ENCODE measurements at regions of chr10 and their contacts with region 1.

Region 1: GRCh38 chr10:120942806-120943413 is 91.7 kb downstream of the WDR11 start:
- DNase-seq: peak; percentile 72 to 91
- H3K4me3 ChIP-seq: peak overlapping the region; percentile 3; the same call in 1 of the 2 replicates
- H3K4me1 ChIP-seq: peaks cover 7% of the 10 kb centered on the region
- H3K27me3 ChIP-seq: no peaks in the 10 kb centered on the region

Region 2: GRCh38 chr10:121608469-121609190 is 665.7 kb after region 1 on chr10:
- in situ Hi-C with region 1: loop called (anchors 25 kb)
- DNase-seq: peak; percentile 24 to 77
- H3K4me3 ChIP-seq: no peak overlapping the region; the same call in 1 of the 2 replicates
- H3K4me1 ChIP-seq: peaks cover 2% of the 10 kb centered on the region; the same call in 1 of the 2 replicates
- H3K27me3 ChIP-seq: no peaks in the 10 kb centered on the region

Region 3: GRCh38 chr10:121900443-121901174 is 957.7 kb after region 1 on chr10:
- in situ Hi-C with region 1: loop called (anchors 5 kb)
- DNase-seq: peak; percentile 39 to 65
- H3K4me3 ChIP-seq: no peak overlapping the region
- H3K4me1 ChIP-seq: no peaks in the 10 kb centered on the region; the same call in 1 of the 2 replicates
- H3K27me3 ChIP-seq: no peaks in the 10 kb centered on the region

Measured in HAP-1 (cell line).